Gastrocnemius medialis (tissue), 4 donors: ENCODE measurements at regions of chr14 and their contacts with region 1.

Region 1: GRCh38 chr14:73058224-73058921 is at the start of gene RBM25:
- DNase-seq: peak; percentile 96 to 97
- ATAC-seq: peak; percentile 99 to 100
- H3K4me3 ChIP-seq: peak within 1 kb of the TSS; percentile 83 to 92 (median 84)
- H3K27ac ChIP-seq: peak within 1 kb of the TSS; percentile 87 to 98 (median 92)
- H3K4me1 ChIP-seq: peaks cover 30 to 37% of the 10 kb centered on the region in 2 donors
- H3K27me3 ChIP-seq: no peaks in the 10 kb centered on the region
- CTCF ChIP-seq: no peak
- POLR2A ChIP-seq: peak; percentile 92 to 93
- total RNA-seq, gene RBM25: 28.4 to 34.1 (median 30.1) TPM

Region 2: DNA sequence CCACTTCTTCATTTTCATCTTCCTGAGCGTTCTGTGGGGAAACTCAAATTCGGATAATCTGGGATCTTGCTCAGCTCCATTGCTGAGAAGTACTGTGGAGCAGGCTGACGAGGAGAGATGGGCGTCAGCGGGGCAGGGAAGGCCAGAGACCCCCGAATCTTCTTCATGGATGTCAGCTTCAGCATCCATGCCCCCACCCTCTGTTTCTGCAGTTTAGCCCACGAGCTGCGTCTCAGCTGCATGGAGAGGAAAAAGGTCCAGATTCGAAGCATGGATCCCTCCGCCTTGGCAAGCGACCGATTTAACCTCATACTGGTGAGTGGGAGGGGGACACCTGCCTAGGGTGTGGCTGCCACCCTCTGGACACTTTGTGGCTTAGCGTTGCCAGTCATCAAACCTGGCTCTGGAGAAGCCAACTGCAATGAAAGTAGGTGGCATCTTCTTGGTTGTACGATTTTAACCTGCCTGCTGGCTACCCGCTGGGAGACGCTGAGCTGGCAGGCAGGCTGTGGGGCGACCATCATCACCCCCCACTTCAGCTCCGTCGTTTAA is 115.5 kb before region 1 on chr14:
- in situ Hi-C with region 1: no loop called
- intact Hi-C with region 1: no loop called
- DNase-seq: no peak
- ATAC-seq: no peak
- H3K4me3 ChIP-seq: no peak overlapping the region
- H3K27ac ChIP-seq: no peak overlapping the region
- H3K4me1 ChIP-seq: no peaks in the 10 kb centered on the region
- H3K27me3 ChIP-seq: no peaks in the 10 kb centered on the region
- CTCF ChIP-seq: no peak
- POLR2A ChIP-seq: no peak

Region 3: DNA sequence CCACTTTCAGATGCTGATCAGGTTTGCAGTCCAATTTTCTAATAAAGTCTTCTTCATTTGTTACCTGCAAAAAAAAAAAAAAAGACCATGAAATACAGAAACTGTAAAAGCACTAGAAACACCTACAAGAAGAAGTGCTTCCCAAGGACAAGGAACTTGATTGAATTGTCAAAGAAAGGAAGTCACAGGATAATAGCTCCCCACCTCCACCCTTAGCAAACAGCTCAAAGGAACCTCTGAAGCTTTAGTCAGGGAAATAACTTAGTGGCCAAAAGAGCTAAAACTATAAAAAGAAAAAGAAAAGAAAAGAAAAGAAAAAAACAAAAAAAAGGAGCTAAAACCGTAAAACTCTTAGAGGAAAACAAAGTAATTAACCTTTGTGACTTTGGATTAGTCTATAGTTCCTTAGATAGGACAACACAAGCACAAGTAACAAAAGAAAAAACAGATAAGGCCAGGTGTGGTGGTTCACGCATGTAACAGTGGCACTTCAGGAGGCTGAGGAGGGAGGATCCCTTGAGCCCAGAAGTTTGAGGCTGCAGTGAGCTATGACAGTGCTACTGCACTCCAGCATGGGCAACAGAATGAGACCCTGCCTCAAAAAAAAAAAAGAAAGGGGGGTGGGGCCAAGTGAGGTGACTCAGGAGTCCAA is 60.0 kb before region 1 on chr14:
- in situ Hi-C with region 1: no loop called
- intact Hi-C with region 1: no loop called
- DNase-seq: no peak
- ATAC-seq: no peak
- H3K4me3 ChIP-seq: no peak overlapping the region
- H3K27ac ChIP-seq: no peak overlapping the region
- H3K4me1 ChIP-seq: peaks cover 0 to 3% of the 10 kb centered on the region in 2 donors
- H3K27me3 ChIP-seq: no peaks in the 10 kb centered on the region
- CTCF ChIP-seq: no peak
- POLR2A ChIP-seq: no peak

Region 4: DNA sequence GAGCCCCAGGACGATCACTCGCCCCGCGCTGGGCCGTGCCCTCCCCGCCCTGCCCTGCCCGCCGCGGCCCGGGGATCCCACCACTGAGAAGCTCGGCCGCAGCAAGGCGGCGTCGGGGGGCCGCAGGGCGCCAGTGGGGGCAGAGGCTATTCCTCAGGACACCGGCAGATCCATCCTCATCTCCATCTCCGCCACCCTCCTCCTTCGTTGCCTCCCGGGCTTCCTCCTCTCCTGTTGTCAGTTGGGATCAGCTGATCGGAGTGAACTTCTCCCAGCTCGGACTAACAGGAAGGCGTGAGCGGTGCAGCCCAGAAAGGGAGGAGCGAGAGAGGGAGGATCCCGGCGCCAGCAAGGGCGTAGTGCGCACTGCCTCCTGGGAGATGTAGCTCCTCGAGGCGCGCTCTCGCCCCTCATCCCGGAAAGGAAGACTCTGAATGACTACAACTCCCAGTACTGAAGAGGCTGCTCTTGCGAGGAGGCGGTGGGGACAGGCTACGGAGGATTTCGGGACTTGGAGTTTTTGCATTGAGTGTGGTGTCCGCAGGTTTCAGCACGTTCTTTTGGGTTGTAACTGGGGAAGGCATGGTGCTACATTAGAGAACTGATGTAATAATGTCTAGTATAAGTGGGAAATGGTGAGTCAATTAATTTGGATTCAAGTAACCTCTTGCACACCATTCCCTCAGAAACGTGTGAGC is 31.4 kb before region 1 on chr14 and contains the start of gene ZFYVE1:
- in situ Hi-C with region 1: no loop called
- intact Hi-C with region 1: loop called (anchors 1 kb)
- DNase-seq: peak; percentile 98 to 99
- ATAC-seq: peak; percentile 99 to 100
- H3K4me3 ChIP-seq: peak within 1 kb of the TSS; percentile 63 to 92 (median 74)
- H3K27ac ChIP-seq: peak within 1 kb of the TSS; percentile 86 to 97 (median 93)
- H3K4me1 ChIP-seq: peaks cover 11 to 36% of the 10 kb centered on the region in 2 donors
- H3K27me3 ChIP-seq: no peaks in the 10 kb centered on the region
- CTCF ChIP-seq: no peak
- POLR2A ChIP-seq: peak; percentile 91 to 93
- total RNA-seq, gene ZFYVE1: 16.7 to 28.3 (median 19.3) TPM

Region 5: GRCh38 chr14:73136387-73137225 is 78.2 kb after region 1 on chr14 and contains the start of gene PSEN1:
- in situ Hi-C with region 1: no loop called
- intact Hi-C with region 1: loop called (anchors 1 kb)
- DNase-seq: peak; percentile 86 to 90
- ATAC-seq: peak; percentile 94 to 95
- H3K4me3 ChIP-seq: peak within 1 kb of the TSS; percentile 73 to 91 (median 84)
- H3K27ac ChIP-seq: peak within 1 kb of the TSS; percentile 89 to 91 (median 90)
- H3K4me1 ChIP-seq: peaks cover 9 to 12% of the 10 kb centered on the region in 2 donors
- H3K27me3 ChIP-seq: no peaks in the 10 kb centered on the region
- CTCF ChIP-seq: no peak
- POLR2A ChIP-seq: peak; percentile 82 to 83
- total RNA-seq, gene PSEN1: 21.4 to 49.0 (median 24.5) TPM